ENCODE measurements at regions of chr10 and their contacts with region 1.

Region 1: GRCh38 chr10:105691811-105692210 is 1050.7 kb downstream of the SORCS3 start:
- DNase-seq: peak; percentile 15
- H3K4me3 ChIP-seq: peak overlapping the region in 1 of 2 experiments; percentile 43; a peak in 1 of 4 replicates
- H3K27ac ChIP-seq: no peak overlapping the region
- H3K4me1 ChIP-seq: no peaks in the 10 kb centered on the region
- H3K27me3 ChIP-seq: no peaks in the 10 kb centered on the region
- CTCF ChIP-seq: no peak
- EP300 ChIP-seq: no peak
- RAD21 ChIP-seq: peak; percentile 78

Region 2: DNA sequence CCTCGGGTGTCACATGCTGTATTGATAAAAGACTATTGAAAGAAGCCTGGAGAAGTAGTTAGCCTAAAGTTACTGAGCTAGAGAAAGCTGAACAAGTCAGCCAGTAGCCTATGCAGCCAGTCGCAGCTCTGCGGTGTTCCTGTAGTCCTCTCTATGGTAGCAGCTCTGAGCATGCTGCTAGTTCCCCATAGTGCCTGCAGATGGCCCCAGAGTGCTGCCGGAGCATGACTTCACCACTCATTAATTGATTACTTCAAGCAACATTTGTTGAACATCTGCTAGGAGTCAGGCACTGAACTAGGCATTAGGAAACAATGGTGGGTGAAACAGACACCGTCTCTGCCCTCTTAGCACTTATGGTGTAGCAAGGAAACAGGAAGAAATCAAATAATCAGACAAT is 628.0 kb before region 1 on chr10:
- CTCF ChIA-PET with region 1: interaction called, 17 read pairs
- POLR2A ChIA-PET with region 1: no interaction called
- DNase-seq: peak; percentile 52
- H3K4me3 ChIP-seq: peak overlapping the region in 1 of 2 experiments; percentile 58; a peak in 1 of 4 replicates
- H3K27ac ChIP-seq: no peak overlapping the region
- H3K4me1 ChIP-seq: no peaks in the 10 kb centered on the region
- H3K27me3 ChIP-seq: no peaks in the 10 kb centered on the region
- CTCF ChIP-seq: peak; percentile 14; the same call in 1 of the 2 replicates
- EP300 ChIP-seq: no peak
- RAD21 ChIP-seq: peak; percentile 91